ENCODE measurements at regions of chr14 and their contacts with region 1.

Region 1: DNA sequence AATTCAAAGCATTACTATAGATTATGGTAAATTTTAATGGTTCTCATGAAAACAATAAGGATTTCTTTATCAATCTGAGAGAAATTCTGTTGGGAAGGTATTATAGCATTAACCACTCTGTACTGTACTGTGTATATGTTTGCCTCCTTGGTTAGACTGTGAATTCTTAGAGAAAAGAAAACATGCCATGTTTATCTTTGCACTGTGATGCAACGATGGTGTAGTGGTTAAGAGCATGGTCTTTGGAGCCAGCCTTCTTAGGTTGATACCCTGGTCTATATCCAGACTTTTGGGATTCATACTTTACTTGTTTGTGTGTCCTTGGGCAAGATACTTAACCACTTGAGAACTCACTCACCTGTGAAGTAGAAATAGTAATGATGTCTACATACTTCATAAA is 32.2 kb upstream of the NUBPL start:
- DNase-seq: no peak
- ATAC-seq: no peak

Region 2: DNA sequence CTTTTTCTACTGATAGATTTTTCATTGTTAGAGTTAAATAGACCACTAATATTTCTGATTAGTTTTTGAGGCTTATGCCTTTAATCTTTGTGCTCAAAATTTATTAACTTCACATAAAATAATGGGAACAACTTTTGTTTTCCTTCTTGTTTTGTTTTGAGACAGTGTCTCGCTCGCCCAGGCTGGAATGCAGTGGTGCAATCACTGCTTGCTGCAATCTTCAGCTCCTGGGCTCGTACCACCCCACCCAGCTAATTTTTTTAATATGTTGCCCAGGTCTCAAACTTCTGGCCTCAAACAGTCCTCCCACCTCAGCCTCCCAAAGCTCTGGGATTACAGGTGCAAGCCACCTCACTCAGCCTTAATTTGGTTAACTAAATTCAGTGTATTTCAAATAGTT is 890.1 kb before region 1 on chr14:
- intact Hi-C with region 1: no loop called
- DNase-seq: no peak
- ATAC-seq: no peak

Region 3: DNA sequence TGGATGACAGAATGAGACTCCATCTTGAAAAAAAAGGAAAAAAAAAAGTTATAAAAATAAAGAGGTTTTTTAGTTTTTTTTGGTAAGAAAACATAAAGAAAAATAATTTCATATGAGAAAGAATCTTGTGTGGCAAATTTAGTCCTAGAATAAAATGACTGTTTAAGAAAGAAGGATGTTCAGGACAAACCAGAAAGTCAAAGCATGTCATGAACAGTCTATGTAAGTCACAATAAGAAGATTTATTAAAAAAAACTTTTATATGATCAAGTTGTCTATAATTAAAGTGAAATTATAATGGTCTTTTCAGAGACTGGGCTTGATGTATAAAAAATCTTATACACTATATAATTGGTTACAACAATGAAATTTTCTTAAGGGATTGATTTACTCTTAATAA is 253.3 kb before region 1 on chr14:
- intact Hi-C with region 1: no loop called
- DNase-seq: no peak
- ATAC-seq: no peak

Region 4: DNA sequence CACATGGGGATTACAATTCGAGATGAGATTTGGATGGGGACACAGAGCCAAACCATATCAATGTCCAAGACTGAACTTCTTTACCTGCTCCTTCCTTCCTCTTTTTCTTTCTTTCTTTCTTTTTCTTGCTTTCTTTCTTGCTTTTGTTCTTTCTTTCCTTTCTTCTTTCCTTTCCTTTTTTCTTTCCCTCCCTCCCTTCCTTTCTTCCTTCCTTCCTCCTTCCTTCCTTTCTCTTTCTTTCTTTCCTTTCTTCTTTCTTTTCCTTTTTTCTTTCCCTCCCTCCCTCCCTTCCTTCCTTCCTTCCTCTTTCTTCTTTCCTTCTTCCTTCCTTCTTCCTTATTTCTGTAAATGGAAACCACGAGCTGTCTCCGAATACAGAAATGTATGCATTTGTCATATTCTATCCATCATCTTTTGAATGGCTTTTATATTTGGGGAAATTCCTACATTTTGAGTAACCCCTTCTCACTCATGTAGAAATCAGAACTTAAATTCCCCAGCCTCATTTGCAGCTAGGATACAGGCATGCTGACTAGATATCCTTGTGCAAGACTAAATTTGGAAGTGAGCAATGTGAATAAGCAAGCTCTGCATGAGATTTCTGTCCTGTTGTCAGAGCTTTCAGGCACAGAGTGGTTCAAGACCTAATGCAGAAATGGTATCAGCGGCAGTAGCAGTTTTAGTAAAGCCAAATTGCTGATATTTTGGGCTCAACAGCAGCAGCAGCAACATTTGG is 52.8 kb before region 1 on chr14:
- intact Hi-C with region 1: no loop called
- DNase-seq: no peak
- ATAC-seq: peak in 1 of 2 donors; percentile 62

Region 5: DNA sequence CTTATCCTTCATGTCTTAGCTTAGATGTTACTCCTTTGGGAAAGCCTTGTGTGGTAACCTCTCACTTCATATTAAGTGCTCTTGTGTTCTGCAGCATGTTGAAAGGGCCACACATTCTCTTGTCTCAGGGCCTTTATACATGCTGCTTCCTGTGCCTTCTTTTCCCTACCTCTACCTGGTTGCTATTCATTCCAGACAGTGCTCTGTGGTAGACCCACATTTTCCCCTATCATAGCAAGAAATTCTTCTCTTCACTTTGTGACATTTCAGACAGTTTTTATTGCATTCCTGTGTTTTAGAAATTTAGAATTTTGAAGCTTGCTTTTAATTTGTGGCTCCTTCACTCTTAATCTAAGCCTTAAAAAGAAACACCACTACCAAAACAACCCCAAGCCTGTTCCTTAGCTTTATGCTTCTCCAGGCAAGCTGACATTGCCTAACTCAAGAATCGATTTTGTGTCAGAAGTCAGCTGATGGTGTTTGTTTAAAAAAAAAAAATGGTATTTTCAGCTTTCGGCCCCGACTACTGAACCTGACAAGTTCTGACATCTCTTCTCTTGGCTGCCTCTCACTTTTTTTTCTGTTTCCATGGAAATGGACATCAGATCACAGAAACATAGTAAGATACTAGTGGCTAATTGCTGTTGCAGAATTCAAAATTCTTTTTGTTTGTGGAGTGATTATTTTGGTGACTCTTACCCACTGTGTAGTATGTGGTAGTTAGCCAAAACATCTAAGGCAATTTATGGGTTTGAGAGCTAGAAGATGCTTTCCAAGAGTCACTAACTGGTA is 188.4 kb after region 1 on chr14:
- intact Hi-C with region 1: no loop called
- DNase-seq: no peak
- ATAC-seq: peak; percentile 54 to 55

Region 6: DNA sequence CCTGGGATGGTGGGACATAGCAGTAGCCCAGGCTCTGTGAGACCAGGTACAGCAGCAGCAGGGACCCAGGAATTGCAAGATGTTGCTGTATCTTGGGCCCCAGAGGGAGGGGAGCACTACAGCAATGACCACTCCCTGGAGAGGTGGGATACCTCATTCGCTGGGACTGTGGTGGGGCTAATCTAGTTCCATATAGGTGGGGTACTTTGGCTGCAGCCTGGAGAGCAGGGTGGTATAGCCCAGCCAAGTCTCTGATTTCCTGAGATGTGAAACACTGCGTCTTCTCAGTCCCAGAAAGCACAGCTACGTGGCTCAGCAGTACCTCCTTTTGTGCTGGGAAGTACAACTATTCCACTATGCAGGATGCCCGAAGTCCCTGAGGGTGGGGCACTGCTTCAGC is 384.3 kb after region 1 on chr14:
- intact Hi-C with region 1: loop called in 1 of 2 experiments (anchors 10 kb)
- DNase-seq: no peak
- ATAC-seq: no peak

Measured in left cardiac atrium (tissue), 4 donors.